GM18951 (cell line): ENCODE measurements at regions of chr10 and their contacts with region 1.

Region 1: DNA sequence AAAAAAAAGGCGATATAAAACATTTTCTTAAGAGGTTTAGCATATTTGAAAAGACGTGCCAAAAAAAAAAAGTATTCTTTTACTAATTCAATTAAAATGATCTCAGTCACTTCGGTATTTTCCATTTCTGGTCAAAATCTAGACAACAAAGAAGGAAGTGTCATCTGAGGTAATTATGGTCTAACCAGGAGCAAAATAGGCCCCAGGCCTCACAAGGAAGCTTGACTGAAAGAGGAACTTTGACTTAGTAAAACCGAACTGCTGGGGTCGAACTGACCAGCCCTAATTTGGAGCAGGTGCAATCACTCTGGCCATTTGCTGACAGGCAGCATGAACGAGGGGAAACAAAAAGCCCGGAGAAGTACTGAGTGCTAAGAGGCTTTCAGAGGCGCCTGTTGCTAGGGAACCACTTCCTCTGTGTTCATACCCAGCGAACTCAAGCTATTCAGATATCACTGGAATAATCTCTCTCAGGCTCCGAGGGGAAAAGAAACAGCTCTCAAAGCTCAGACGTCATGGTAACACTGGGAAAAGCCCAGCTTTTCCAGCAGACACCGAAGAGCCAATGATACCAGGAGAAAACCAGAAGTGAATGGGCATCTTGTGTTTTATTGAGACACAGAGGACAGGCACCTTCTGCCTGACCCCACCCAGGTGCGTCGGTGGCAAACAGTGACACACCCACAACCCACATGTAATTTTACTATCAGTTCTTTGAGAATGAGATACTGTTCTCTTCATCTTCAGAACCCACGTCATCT is 126.5 kb downstream of the FAM107B start:
- POLR2A ChIP-seq: no peak

Region 2: DNA sequence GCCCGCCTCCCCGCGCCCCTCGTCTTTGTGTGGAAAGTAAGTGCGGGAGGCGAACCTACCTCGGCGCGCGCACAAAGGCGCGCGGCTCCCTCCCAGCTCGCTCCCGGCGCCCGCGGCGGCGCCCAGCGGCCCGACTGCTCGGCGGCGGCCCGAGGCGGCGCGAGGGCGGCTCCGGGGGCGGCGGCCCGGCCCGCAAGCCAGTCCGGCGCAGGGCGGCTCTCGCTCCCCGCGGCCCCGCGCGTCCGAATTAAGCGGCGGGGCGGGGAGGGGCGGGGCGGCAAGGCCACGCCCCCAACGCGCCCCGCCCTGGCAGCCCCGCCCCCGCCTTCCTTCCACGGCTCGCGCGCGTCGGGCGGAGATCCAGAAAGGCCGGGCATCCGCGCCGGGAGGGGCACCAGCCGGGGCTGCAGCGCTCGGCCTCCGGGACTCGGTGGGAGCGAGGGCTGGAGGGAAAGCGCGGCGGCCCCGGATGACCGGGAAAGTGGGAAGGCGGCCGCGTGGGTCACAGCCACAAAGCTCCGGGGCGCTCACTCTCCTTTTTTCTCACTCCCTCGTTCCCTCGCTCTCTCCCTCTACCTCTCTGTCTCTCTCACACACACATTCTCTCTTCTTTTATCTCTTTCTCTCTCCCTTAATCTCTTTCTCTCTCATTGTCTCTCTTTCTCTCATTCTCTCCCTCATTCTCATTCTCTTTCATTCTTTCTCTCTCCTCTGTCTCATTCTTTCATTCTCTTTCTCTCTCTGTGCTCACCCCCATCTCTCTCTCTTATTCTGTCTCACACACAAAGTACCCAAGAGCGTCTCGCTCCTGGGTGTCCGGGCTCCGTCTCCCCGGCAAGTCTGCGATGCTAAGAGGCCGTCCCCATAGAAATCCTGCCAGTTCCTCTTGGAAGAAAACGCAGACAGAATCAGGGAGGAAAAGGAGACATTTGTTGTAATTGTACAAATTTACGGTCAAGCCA is 43.7 kb before region 1 on chr10:
- in situ Hi-C with region 1: loop called (anchors 5 kb)
- POLR2A ChIP-seq: peak; percentile 95